CD14-positive monocyte (primary cell): ENCODE measurements at regions of chr14 and their contacts with region 1.

Region 1: DNA sequence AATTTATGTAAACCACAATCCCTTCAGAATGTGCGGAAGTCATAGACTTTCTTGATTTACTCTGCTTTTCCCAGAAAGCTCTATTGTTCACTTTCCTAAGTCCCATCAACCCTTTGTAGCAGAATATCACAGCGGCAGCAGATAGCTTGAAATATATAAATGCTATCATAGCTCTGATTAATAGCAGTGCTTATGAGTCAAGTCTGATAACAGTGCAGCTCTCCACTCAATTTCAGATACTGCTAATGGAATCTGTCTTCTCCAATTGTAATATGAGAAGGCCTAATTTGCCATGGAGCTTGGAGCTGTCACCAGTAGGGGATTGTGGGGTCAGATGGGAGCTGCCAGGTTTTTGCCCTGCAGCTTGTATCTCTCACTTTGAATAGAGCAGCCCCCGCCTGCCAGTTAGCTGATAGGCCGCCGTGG is 10.9 kb downstream of the TMEM260 start:
- DNase-seq: no peak
- H3K4me3 ChIP-seq: no peak overlapping the region
- H3K4me3 Mint-ChIP-seq: no peak overlapping the region
- H3K27ac ChIP-seq: no peak overlapping the region
- H3K27ac Mint-ChIP-seq: no peak overlapping the region
- H3K4me1 ChIP-seq: no peaks in the 10 kb centered on the region
- H3K4me1 Mint-ChIP-seq: no peaks in the 10 kb centered on the region
- H3K27me3 ChIP-seq: no peaks in the 10 kb centered on the region
- H3K27me3 Mint-ChIP-seq: no peaks in the 10 kb centered on the region
- CTCF ChIP-seq: no peak

Region 2: GRCh38 chr14:55180434-55180833 is 1410.1 kb before region 1 on chr14:
- intact Hi-C with region 1: loop called in 1 of 2 experiments (anchors 10 kb)
- DNase-seq: no peak
- H3K4me3 ChIP-seq: no peak overlapping the region
- H3K4me3 Mint-ChIP-seq: no peak overlapping the region
- H3K27ac ChIP-seq: no peak overlapping the region
- H3K27ac Mint-ChIP-seq: peak overlapping the region in 1 of 7 donors; percentile 22
- H3K4me1 ChIP-seq: no peaks in the 10 kb centered on the region
- H3K4me1 Mint-ChIP-seq: no peaks in the 10 kb centered on the region
- H3K27me3 ChIP-seq: no peaks in the 10 kb centered on the region
- H3K27me3 Mint-ChIP-seq: peaks cover 0 to 2% (median 0%) of the 10 kb centered on the region in 3 donors
- CTCF ChIP-seq: no peak

Region 3: GRCh38 chr14:56686416-56686815 is 95.9 kb after region 1 on chr14:
- intact Hi-C with region 1: no loop called
- DNase-seq: no peak
- H3K4me3 ChIP-seq: no peak overlapping the region
- H3K4me3 Mint-ChIP-seq: no peak overlapping the region
- H3K27ac ChIP-seq: no peak overlapping the region
- H3K27ac Mint-ChIP-seq: no peak overlapping the region
- H3K4me1 ChIP-seq: no peaks in the 10 kb centered on the region
- H3K4me1 Mint-ChIP-seq: no peaks in the 10 kb centered on the region
- H3K27me3 ChIP-seq: no peaks in the 10 kb centered on the region
- H3K27me3 Mint-ChIP-seq: peaks cover 0 to 7% (median 0%) of the 10 kb centered on the region in 3 donors
- CTCF ChIP-seq: no peak